ENCODE measurements at regions of chr12 and their contacts with region 1.

Region 1: GRCh38 chr12:70049600-70050360 is 193.5 kb upstream of the CNOT2 start:
- DNase-seq: peak; percentile 69 to 71
- ATAC-seq: peak; percentile 91 to 98 (median 97)
- H3K4me3 ChIP-seq: no peak overlapping the region
- H3K4me3 Mint-ChIP-seq: peak overlapping the region; percentile 70
- H3K27ac ChIP-seq: peak overlapping the region; percentile 47
- H3K27ac Mint-ChIP-seq: peak overlapping the region; percentile 82 to 87
- H3K4me1 ChIP-seq: peaks cover 14% of the 10 kb centered on the region
- H3K4me1 Mint-ChIP-seq: peaks cover 60 to 61% of the 10 kb centered on the region in 2 donors
- H3K27me3 ChIP-seq: peaks cover 2% of the 10 kb centered on the region
- H3K27me3 Mint-ChIP-seq: peaks cover 24 to 30% of the 10 kb centered on the region in 2 donors
- CTCF ChIP-seq: no peak

Region 2: GRCh38 chr12:69991341-69992288 is 58.2 kb before region 1 on chr12:
- intact Hi-C with region 1: no loop called
- DNase-seq: no peak
- ATAC-seq: peak in 1 of 3 donors; percentile 36
- H3K4me3 ChIP-seq: no peak overlapping the region
- H3K4me3 Mint-ChIP-seq: no peak overlapping the region
- H3K27ac ChIP-seq: no peak overlapping the region
- H3K27ac Mint-ChIP-seq: no peak overlapping the region
- H3K4me1 ChIP-seq: no peaks in the 10 kb centered on the region
- H3K4me1 Mint-ChIP-seq: no peaks in the 10 kb centered on the region
- H3K27me3 ChIP-seq: no peaks in the 10 kb centered on the region
- H3K27me3 Mint-ChIP-seq: peaks cover 3 to 33% of the 10 kb centered on the region in 2 donors
- CTCF ChIP-seq: no peak

Region 3: DNA sequence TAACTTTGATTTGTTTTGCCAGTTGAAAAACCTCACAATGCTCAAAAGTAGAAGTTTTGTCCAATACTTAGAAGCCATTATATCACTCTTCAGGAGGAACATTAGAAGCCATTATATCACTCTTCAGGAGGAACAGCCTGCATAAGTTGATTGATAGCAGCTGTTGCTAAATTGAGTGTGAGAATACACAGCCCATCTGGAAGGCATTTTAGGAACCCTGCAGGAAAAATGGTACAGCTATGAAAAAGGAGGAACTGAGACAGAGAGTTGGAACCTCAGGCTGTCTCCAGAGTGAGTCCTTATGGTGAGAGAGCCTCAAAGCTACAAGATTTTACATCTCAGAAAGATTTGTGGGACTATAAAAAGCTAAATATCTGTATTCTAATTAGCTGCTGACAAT is 17.7 kb before region 1 on chr12:
- intact Hi-C with region 1: loop called (anchors 2 kb)
- DNase-seq: no peak
- ATAC-seq: no peak
- H3K4me3 ChIP-seq: no peak overlapping the region
- H3K4me3 Mint-ChIP-seq: peak overlapping the region; percentile 32
- H3K27ac ChIP-seq: no peak overlapping the region
- H3K27ac Mint-ChIP-seq: peak overlapping the region in 1 of 2 donors; percentile 10
- H3K4me1 ChIP-seq: no peaks in the 10 kb centered on the region
- H3K4me1 Mint-ChIP-seq: peaks cover 16 to 20% of the 10 kb centered on the region in 2 donors
- H3K27me3 ChIP-seq: no peaks in the 10 kb centered on the region
- H3K27me3 Mint-ChIP-seq: peaks cover 0 to 4% of the 10 kb centered on the region in 2 donors
- CTCF ChIP-seq: no peak

Region 4: DNA sequence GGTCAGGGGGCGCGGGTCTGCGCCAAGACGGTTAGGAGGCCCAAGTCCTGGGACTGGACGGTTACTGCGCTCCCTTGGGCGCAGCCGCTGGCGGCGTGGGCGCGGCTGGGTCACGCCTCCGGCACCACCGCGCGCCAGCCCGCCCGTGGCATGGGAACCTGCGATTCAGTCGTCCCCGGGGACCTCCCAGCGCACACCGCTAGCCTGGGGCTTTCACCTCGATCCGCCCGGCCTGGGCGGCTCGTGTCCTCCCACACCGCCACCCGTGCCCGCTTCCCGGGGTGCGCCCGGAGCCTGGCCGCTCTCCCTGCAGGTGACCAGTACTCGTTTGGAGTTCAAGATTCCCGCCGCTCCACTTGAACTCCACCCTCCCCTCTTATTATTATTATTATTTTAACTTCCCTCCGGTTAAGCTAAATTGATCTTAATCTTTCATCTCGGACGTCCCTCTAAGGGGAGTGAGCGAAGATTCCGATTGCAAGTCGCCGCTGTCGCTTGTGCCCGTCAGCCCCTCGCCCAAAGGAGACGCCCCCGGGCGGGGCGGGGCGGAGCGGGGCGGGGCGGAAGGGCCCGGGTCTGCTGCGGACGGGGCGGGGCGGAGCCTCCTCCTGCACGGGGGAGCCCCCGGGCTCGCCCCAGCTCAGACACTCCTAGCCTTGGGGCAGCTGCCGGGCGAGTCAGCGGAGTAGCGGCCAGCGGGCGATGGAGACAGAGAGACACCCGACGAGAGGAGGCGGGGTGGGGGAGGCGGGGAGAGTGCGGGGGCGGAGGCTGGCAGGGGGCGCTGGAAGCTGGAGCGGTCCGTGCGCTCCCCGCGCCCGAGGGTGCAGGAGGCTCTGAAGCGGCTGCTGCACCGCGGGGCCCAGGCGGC is 316.1 kb after region 1 on chr12 and contains the start of gene KCNMB4:
- intact Hi-C with region 1: loop called (anchors 5 kb)
- DNase-seq: peak; percentile 45 to 77
- ATAC-seq: peak; percentile 71 to 83 (median 80)
- H3K4me3 ChIP-seq: peak within 1 kb of the TSS; percentile 82
- H3K4me3 Mint-ChIP-seq: peak within 1 kb of the TSS; percentile 90
- H3K27ac ChIP-seq: no peak within 1 kb of the TSS
- H3K27ac Mint-ChIP-seq: peak within 1 kb of the TSS in 1 of 2 donors; percentile 84
- H3K4me1 ChIP-seq: peaks cover 14% of the 10 kb centered on the region
- H3K4me1 Mint-ChIP-seq: peaks cover 10 to 20% of the 10 kb centered on the region in 2 donors
- H3K27me3 ChIP-seq: peaks cover 18% of the 10 kb centered on the region
- H3K27me3 Mint-ChIP-seq: peaks cover 15 to 28% of the 10 kb centered on the region in 2 donors
- CTCF ChIP-seq: no peak
- total RNA-seq, gene KCNMB4: 0.43 TPM in 1 of 3 donors, not detected in the others

Region 5: GRCh38 chr12:70459786-70460185 is 410.0 kb after region 1 on chr12:
- intact Hi-C with region 1: no loop called
- DNase-seq: no peak
- ATAC-seq: no peak
- H3K4me3 ChIP-seq: no peak overlapping the region
- H3K4me3 Mint-ChIP-seq: no peak overlapping the region
- H3K27ac ChIP-seq: no peak overlapping the region
- H3K27ac Mint-ChIP-seq: no peak overlapping the region
- H3K4me1 ChIP-seq: no peaks in the 10 kb centered on the region
- H3K4me1 Mint-ChIP-seq: no peaks in the 10 kb centered on the region
- H3K27me3 ChIP-seq: no peaks in the 10 kb centered on the region
- H3K27me3 Mint-ChIP-seq: peaks cover 5 to 8% of the 10 kb centered on the region in 2 donors
- CTCF ChIP-seq: no peak

Measured in natural killer cell (primary cell).